Activated naive CD4-positive, alpha-beta T cell treated with anti-CD3 and anti-CD28 coated beads for 36 hours (primary cell): ENCODE measurements at regions of chr3 and their contacts with region 1.

Region 1: GRCh38 chr3:56753206-56753820 is 48.4 kb downstream of the ARHGEF3 start:
- DNase-seq: peak; percentile 73
- H3K4me3 Mint-ChIP-seq: no peak overlapping the region
- H3K27ac Mint-ChIP-seq: peak overlapping the region; percentile 44
- H3K4me1 Mint-ChIP-seq: peaks cover 56% of the 10 kb centered on the region
- H3K27me3 Mint-ChIP-seq: no peaks in the 10 kb centered on the region

Region 2: DNA sequence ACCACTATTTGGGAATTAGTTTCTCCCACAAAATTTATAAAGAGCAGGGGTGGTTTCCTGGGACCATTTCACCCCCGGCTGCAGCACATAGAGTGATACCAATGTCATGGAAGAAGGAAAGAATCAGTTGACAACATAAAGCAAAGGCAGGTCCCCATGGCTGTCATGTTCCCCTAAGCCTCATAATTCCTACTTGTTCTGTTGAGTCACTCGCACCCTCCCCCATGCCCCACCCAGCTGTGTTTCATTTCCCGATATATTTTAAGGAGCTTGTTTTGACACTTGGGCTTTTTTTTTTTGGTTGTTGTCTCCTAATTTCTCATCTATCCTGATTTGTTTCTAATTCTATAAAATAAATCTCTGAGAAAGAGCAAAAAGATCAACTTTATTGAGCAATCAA is 309.9 kb before region 1 on chr3:
- CTCF ChIA-PET with region 1: no interaction called
- intact Hi-C with region 1: no loop called
- DNase-seq: no peak
- H3K4me3 Mint-ChIP-seq: no peak overlapping the region
- H3K27ac Mint-ChIP-seq: no peak overlapping the region
- H3K4me1 Mint-ChIP-seq: no peaks in the 10 kb centered on the region
- H3K27me3 Mint-ChIP-seq: peaks cover 14% of the 10 kb centered on the region

Region 3: DNA sequence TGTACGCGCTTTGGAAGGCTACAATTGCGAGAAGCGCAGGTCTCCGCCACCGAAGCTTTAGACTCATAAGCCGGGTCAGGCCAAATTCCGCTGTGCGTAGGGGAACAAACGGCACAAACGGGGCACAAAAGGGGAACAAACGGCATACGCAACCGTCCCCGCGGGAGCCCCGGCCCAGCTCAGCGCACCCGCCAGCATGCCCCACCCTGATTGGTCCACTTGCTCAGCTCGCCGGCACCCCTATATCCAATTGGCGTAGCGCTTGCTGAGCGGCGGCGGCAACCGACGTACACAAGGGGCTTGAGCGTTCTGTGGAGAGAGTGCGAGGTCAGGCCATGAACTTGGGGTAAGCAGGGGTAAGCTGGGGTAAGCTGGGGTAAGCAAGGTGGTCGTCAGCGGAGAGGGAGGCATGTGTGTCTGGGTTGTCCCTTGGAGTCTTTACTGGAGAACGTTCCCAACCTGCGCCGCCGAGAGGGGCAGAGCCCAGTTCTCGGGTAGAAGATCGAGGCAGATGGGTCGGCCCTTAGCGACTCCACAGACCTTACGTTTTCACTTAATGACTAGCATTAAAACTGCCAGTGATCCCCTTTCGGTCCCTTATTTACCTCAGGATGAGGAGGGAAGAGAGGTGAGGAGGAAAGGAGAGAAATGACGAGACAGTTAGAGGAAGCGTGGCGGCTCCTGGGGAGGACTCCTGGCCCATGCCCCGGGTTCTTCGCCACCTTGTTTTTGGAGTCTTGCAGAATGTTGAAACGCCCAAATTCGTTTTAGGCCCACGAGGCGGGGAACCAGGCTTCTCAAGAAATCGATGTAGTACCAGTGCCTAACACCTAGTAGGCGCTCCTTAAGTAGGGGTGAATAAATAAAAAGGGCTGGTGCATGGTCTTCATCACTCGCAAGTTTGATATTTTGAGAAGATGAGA is 196.1 kb before region 1 on chr3 and contains the start of gene CCDC66:
- CTCF ChIA-PET with region 1: no interaction called
- intact Hi-C with region 1: loop called (anchors 2 kb)
- DNase-seq: peak; percentile 97
- H3K4me3 Mint-ChIP-seq: peak within 1 kb of the TSS; percentile 94
- H3K27ac Mint-ChIP-seq: peak within 1 kb of the TSS; percentile 97
- H3K4me1 Mint-ChIP-seq: peaks cover 26% of the 10 kb centered on the region
- H3K27me3 Mint-ChIP-seq: no peaks in the 10 kb centered on the region
- total RNA-seq, gene CCDC66: 29.0 to 29.3 TPM

Region 4: DNA sequence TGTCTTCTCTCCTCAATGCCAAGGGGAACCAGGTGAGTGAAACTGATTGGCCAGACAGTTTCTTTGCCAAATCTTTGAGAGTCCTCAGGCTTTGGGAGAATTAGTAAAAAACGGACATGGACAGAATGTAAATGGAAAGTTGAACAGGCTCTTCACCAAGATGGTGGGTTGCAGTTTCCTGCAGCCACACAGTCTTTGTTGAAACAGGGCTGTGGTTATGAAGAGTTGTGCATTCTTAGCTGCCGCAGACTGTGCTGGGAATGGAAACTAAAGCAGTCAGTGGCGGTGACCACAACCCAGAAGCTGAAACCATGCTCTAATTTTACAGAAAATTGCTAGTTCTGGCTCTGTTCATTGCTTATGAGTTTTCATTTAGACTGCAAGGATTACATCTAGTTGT is 28.1 kb before region 1 on chr3:
- CTCF ChIA-PET with region 1: no interaction called
- intact Hi-C with region 1: loop called (anchors 1 kb)
- DNase-seq: peak; percentile 83
- H3K4me3 Mint-ChIP-seq: peak overlapping the region; percentile 61
- H3K27ac Mint-ChIP-seq: peak overlapping the region; percentile 91
- H3K4me1 Mint-ChIP-seq: peaks cover 35% of the 10 kb centered on the region
- H3K27me3 Mint-ChIP-seq: no peaks in the 10 kb centered on the region

Region 5: GRCh38 chr3:56783644-56784447 is 30.5 kb after region 1 on chr3:
- CTCF ChIA-PET with region 1: interaction called, 9 read pairs
- intact Hi-C with region 1: loop called (anchors 1 kb)
- DNase-seq: peak; percentile 88
- H3K4me3 Mint-ChIP-seq: peak overlapping the region; percentile 70
- H3K27ac Mint-ChIP-seq: peak overlapping the region; percentile 98
- H3K4me1 Mint-ChIP-seq: peaks cover 95% of the 10 kb centered on the region
- H3K27me3 Mint-ChIP-seq: no peaks in the 10 kb centered on the region

Region 6: GRCh38 chr3:56790016-56790821 is 36.9 kb after region 1 on chr3:
- CTCF ChIA-PET with region 1: interaction called, 9 read pairs
- intact Hi-C with region 1: loop called (anchors 1 kb)
- DNase-seq: peak; percentile 57
- H3K4me3 Mint-ChIP-seq: peak overlapping the region; percentile 19
- H3K27ac Mint-ChIP-seq: peak overlapping the region; percentile 98
- H3K4me1 Mint-ChIP-seq: peaks cover 84% of the 10 kb centered on the region
- H3K27me3 Mint-ChIP-seq: no peaks in the 10 kb centered on the region

Region 7: DNA sequence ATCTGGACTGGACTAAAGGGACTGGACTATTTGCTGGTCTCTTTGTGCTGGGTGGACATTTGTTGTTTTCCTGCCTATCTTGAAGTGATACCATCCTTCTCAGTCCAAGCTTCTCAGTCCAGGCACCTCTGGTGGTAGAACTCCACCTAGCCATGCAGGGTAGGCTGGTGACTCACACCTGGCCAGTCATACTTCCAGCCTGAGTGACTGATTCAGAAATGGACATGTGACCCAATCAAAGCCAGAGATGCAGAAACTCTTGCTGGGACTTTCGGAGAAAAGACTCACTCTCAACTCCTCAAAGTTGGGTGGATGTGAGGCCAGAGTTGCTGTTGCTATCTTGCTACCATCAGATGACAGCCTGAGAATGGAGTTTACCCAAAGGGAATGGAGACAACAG is 544.7 kb after region 1 on chr3:
- CTCF ChIA-PET with region 1: no interaction called
- intact Hi-C with region 1: no loop called
- DNase-seq: peak; percentile 23
- H3K4me3 Mint-ChIP-seq: no peak overlapping the region
- H3K27ac Mint-ChIP-seq: no peak overlapping the region
- H3K4me1 Mint-ChIP-seq: no peaks in the 10 kb centered on the region
- H3K27me3 Mint-ChIP-seq: peaks cover 7% of the 10 kb centered on the region